Naive thymus-derived CD4-positive, alpha-beta T cell (primary cell): ENCODE measurements at regions of chr4 and their contacts with region 1.

Region 1: DNA sequence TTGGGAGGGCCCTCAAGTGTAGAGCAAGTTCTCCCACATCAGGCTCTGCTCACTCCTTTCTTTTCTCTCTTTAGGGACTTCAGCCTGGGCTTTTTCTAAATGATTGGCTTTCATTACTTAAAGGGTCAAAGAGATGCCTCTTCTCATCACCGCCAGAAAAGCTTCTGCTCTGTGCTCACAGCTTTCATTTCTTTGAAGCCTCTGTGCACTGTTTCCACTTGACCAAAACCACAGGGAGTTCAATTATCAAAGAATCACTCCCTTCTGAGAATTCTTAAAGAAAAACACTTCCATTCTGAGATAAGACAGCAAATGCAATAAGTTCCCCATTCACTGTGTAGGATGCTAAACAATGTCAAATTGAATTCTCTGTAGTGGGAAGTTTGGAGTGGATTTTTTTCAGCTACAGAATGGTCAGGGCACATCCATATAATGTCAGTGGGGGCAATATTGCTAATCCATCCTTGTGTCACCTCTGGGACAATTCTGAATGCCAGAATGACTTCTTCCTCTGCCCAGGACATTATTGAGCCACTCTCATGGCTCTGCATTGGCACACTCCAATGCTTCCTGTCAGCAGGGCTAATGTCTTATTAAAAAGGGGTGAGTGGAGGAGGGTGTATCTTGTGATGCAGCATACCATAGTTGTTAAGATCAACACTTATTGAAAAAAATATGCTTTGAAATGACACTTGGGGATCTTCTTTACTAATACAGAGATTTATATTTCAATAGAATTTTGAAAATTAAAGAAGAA is 217.6 kb downstream of the SNCA start:
- DNase-seq: peak in 1 of 9 donors; percentile 18
- ATAC-seq: peak; percentile 40
- H3K4me3 ChIP-seq: peak overlapping the region; percentile 16
- H3K4me3 Mint-ChIP-seq: peak overlapping the region in 9 of 10 donors; percentile 26 to 80 (median 62)
- H3K27ac ChIP-seq: no peak overlapping the region
- H3K27ac Mint-ChIP-seq: peak overlapping the region in 8 of 9 donors; percentile 13 to 92 (median 70)
- H3K4me1 ChIP-seq: peaks cover 0 to 14% of the 10 kb centered on the region in 2 donors
- H3K4me1 Mint-ChIP-seq: peaks cover 4 to 46% (median 19%) of the 10 kb centered on the region in 7 donors
- H3K27me3 ChIP-seq: no peaks in the 10 kb centered on the region
- H3K27me3 Mint-ChIP-seq: peaks cover 0 to 3% (median 0%) of the 10 kb centered on the region in 5 donors

Region 2: GRCh38 chr4:89230271-89230670 is 389.1 kb before region 1 on chr4:
- CTCF ChIA-PET with region 1: no interaction called
- POLR2A ChIA-PET with region 1: no interaction called
- intact Hi-C with region 1: no loop called
- DNase-seq: no peak
- ATAC-seq: no peak
- H3K4me3 ChIP-seq: no peak overlapping the region
- H3K4me3 Mint-ChIP-seq: no peak overlapping the region
- H3K27ac ChIP-seq: no peak overlapping the region
- H3K27ac Mint-ChIP-seq: no peak overlapping the region
- H3K4me1 ChIP-seq: no peaks in the 10 kb centered on the region
- H3K4me1 Mint-ChIP-seq: peaks cover 0 to 10% (median 5%) of the 10 kb centered on the region in 7 donors
- H3K27me3 ChIP-seq: no peaks in the 10 kb centered on the region
- H3K27me3 Mint-ChIP-seq: no peaks in the 10 kb centered on the region

Region 3: GRCh38 chr4:89598602-89599001 is 20.8 kb before region 1 on chr4:
- CTCF ChIA-PET with region 1: no interaction called
- POLR2A ChIA-PET with region 1: no interaction called
- intact Hi-C with region 1: loop called in 1 of 2 experiments (anchors 2 kb)
- DNase-seq: peak in 1 of 9 donors; percentile 6
- ATAC-seq: no peak
- H3K4me3 ChIP-seq: no peak overlapping the region
- H3K4me3 Mint-ChIP-seq: no peak overlapping the region
- H3K27ac ChIP-seq: no peak overlapping the region
- H3K27ac Mint-ChIP-seq: no peak overlapping the region
- H3K4me1 ChIP-seq: no peaks in the 10 kb centered on the region
- H3K4me1 Mint-ChIP-seq: no peaks in the 10 kb centered on the region
- H3K27me3 ChIP-seq: no peaks in the 10 kb centered on the region
- H3K27me3 Mint-ChIP-seq: peaks cover 4 to 20% (median 9%) of the 10 kb centered on the region in 5 donors